ENCODE measurements at regions of chr3 and their contacts with region 1.

Region 1: GRCh38 chr3:107064445-107065060 is 312.7 kb upstream of the CCDC54 start:
- DNase-seq: peak; percentile 55
- CTCF ChIP-seq: peak; percentile 85

Region 2: GRCh38 chr3:107077391-107077790 is 12.8 kb after region 1 on chr3:
- CTCF ChIA-PET with region 1: interaction called, 11 read pairs
- POLR2A ChIA-PET with region 1: no interaction called
- DNase-seq: no peak
- CTCF ChIP-seq: no peak

Region 3: DNA sequence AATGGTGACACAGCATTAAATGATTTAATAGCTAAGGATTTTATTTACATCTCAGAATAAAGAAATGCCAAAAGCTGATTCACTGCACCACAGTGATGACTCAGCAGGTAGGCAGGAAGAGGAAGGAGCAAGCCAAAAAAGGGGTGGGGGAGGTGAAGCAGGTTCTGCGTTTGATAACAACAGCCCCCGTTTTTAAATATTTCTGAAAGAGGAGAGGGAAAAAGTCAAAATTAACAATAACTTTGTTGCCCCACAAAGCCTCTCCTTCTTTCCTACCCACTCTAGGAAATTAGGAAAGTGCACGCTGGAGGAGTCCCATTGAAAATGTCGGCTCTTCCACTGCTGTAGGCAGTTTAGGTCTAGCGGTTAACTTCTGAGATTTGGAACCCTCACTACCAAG is 302.8 kb after region 1 on chr3:
- CTCF ChIA-PET with region 1: no interaction called
- POLR2A ChIA-PET with region 1: no interaction called
- DNase-seq: no peak
- CTCF ChIP-seq: no peak

Measured in GM10248 (cell line).